ENCODE measurements at regions of chr1 and their contacts with region 1.

Region 1: GRCh38 chr1:171313835-171314320 is at the start of gene FMO4:
- DNase-seq: peak; percentile 94
- ATAC-seq: peak; percentile 100
- H3K4me3 ChIP-seq: peak within 1 kb of the TSS; percentile 71
- H3K27ac ChIP-seq: peak within 1 kb of the TSS; percentile 53; the same call in 1 of the 2 replicates
- H3K4me1 ChIP-seq: 0 out of 2 replicates have a peak, but pooled peaks cover 6% of the 10 kb centered on the region
- H3K27me3 ChIP-seq: no peaks in the 10 kb centered on the region
- CTCF ChIP-seq: peak; percentile 72 to 90 (median 87)
- EP300 ChIP-seq: no peak; a peak in 1 of 4 replicates
- POLR2A ChIP-seq: peak; percentile 28; the same call in 1 of the 2 replicates
- RAD21 ChIP-seq: peak; percentile 72
- polyA plus RNA-seq, gene FMO4: 1.4 to 1.8 TPM

Region 2: GRCh38 chr1:170692866-170693575 is 620.9 kb before region 1 on chr1:
- CTCF ChIA-PET with region 1: interaction called, 14 read pairs
- POLR2A ChIA-PET with region 1: no interaction called
- RAD21 ChIA-PET with region 1: interaction called, 5 read pairs
- SMC1A ChIA-PET with region 1: no interaction called
- in situ Hi-C with region 1: no loop called
- intact Hi-C with region 1: no loop called
- DNase-seq: no peak
- ATAC-seq: no peak
- H3K4me3 ChIP-seq: no peak overlapping the region
- H3K27ac ChIP-seq: no peak overlapping the region
- H3K4me1 ChIP-seq: no peaks in the 10 kb centered on the region
- H3K27me3 ChIP-seq: no peaks in the 10 kb centered on the region
- CTCF ChIP-seq: no peak
- EP300 ChIP-seq: no peak
- POLR2A ChIP-seq: no peak
- RAD21 ChIP-seq: no peak

Region 3: GRCh38 chr1:171081314-171081753 is 232.5 kb before region 1 on chr1:
- CTCF ChIA-PET with region 1: interaction called, 36 read pairs
- POLR2A ChIA-PET with region 1: no interaction called
- RAD21 ChIA-PET with region 1: interaction called, 27 read pairs
- SMC1A ChIA-PET with region 1: interaction called, 13 read pairs
- in situ Hi-C with region 1: no loop called
- intact Hi-C with region 1: loop called (anchors 10 kb)
- DNase-seq: no peak
- ATAC-seq: peak; percentile 31; the same call in 1 of the 3 replicates
- H3K4me3 ChIP-seq: no peak overlapping the region
- H3K27ac ChIP-seq: no peak overlapping the region
- H3K4me1 ChIP-seq: no peaks in the 10 kb centered on the region
- H3K27me3 ChIP-seq: no peaks in the 10 kb centered on the region
- CTCF ChIP-seq: peak in 1 of 3 experiments; percentile 36; a peak in 2 of 6 replicates
- EP300 ChIP-seq: no peak
- POLR2A ChIP-seq: no peak
- RAD21 ChIP-seq: peak; percentile 30; the same call in 1 of the 2 replicates

Region 4: GRCh38 chr1:171226747-171227370 is 87.0 kb before region 1 on chr1:
- CTCF ChIA-PET with region 1: interaction called, 22 read pairs
- POLR2A ChIA-PET with region 1: no interaction called
- RAD21 ChIA-PET with region 1: interaction called, 15 read pairs
- SMC1A ChIA-PET with region 1: interaction called, 8 read pairs
- in situ Hi-C with region 1: no loop called
- intact Hi-C with region 1: no loop called
- DNase-seq: peak; percentile 11
- ATAC-seq: peak; percentile 95
- H3K4me3 ChIP-seq: no peak overlapping the region
- H3K27ac ChIP-seq: no peak overlapping the region
- H3K4me1 ChIP-seq: no peaks in the 10 kb centered on the region
- H3K27me3 ChIP-seq: no peaks in the 10 kb centered on the region
- CTCF ChIP-seq: peak; percentile 61 to 82 (median 73)
- EP300 ChIP-seq: no peak
- POLR2A ChIP-seq: no peak
- RAD21 ChIP-seq: peak; percentile 84

Region 5: DNA sequence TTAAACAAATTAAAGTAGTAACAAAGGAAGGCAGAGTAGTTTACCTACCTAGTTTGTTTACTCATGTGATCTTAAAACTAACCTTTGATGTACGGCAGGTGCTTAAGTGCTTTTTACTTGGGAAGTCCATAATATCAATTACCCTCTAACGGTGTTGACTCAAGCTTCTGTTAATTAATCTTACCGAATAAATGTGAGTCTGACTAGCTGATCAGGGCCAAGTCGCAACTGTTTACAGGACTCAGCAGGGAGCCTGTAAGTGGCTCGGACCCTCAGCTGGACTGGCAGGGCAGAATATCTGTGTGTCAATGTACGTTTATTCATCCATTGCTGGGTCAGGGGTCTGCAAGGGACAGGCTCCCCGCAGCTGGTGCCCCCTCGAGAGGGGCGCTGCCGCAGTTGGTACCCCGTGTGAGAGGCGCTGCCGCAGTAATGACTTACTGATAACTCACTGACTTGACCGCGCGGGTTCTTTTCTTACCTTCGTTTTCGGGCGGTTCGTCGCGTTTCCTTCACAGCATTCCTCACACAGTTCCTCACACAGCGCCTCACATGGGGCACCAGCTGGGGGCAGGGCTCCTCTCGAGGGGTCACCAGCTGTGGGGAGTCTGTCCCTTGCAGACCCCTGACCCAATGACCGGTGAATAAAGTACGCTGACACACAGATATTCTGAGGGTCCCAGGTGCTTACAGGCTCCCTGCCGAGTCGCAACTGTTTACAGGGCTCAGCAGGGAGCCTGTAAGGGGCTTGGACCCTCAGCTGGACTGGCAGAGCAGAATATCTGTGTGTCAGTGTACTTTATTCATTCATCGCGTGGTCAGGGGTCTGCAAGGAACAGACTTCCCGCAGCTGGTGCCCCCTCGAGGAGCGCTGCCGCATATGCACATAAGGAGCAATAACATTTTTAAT is 62.6 kb before region 1 on chr1:
- CTCF ChIA-PET with region 1: interaction called, 162 read pairs
- POLR2A ChIA-PET with region 1: interaction called, 5 read pairs
- RAD21 ChIA-PET with region 1: interaction called, 46 read pairs
- SMC1A ChIA-PET with region 1: interaction called, 60 read pairs
- in situ Hi-C with region 1: no loop called
- intact Hi-C with region 1: no loop called
- DNase-seq: no peak
- ATAC-seq: peak; percentile 68
- H3K4me3 ChIP-seq: peak overlapping the region; percentile 72
- H3K27ac ChIP-seq: no peak overlapping the region
- H3K4me1 ChIP-seq: peaks cover 10% of the 10 kb centered on the region
- H3K27me3 ChIP-seq: peaks cover 1 to 3% of the 10 kb centered on the region in 2 experiments; a peak in 1 of 4 replicates
- CTCF ChIP-seq: peak; percentile 34 to 53 (median 50); a peak in 5 of 6 replicates
- EP300 ChIP-seq: no peak
- POLR2A ChIP-seq: no peak
- RAD21 ChIP-seq: no peak